Right ventricle myocardium inferior (tissue), 1 donor: ENCODE measurements at regions of chr17 and their contacts with region 1.

Region 1: DNA sequence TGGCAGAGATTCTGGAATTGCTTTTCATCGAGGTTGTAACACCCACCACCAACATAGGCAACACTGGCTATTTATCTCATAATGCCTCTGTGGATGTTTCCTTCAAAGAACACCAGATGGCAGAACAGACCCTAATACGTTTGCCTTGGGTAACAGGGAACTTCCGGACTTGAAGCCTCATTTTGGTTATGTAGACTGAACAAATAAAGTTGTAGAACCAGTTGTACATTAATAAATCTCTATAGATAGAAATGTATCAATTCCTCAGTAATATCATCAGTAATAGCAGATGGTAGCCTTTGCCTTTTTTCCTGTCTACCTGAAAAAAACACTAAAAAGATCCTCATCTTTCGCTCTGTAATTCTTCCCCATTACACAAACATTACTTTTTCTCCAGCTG is 25.9 kb upstream of the APOH start:
- DNase-seq: no peak
- ATAC-seq: peak; percentile 59

Region 2: GRCh38 chr17:66228887-66229782 is 26.0 kb before region 1 on chr17 and contains the start of gene APOH:
- intact Hi-C with region 1: no loop called
- DNase-seq: no peak
- ATAC-seq: no peak
- total RNA-seq, gene APOH: not detected

Region 3: DNA sequence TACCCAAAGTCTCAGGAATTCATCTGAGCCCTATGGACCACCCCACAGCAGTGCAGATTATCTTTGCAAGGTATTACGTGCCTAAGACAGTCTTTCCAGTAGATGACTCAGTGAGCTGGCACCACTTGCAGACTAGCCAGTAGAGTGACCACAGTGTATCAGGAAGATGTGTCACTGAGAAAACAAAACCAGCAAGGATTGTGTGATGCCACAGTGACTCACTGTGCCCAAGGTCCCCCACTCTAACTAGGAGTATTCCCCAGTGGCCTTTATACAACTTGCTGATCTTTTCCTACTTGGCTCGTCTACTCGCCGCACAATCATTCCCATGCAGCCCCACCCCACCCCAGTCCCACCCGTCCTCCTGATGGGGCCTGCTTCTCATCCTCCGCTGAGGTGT is 20.5 kb after region 1 on chr17:
- intact Hi-C with region 1: no loop called
- DNase-seq: no peak
- ATAC-seq: no peak

Region 4: GRCh38 chr17:66304304-66305174 is 49.4 kb after region 1 on chr17:
- intact Hi-C with region 1: no loop called
- DNase-seq: no peak
- ATAC-seq: no peak

Region 5: GRCh38 chr17:66331038-66331816 is 76.1 kb after region 1 on chr17:
- intact Hi-C with region 1: no loop called
- DNase-seq: no peak
- ATAC-seq: peak; percentile 59

Region 6: GRCh38 chr17:66567234-66568170 is 312.4 kb after region 1 on chr17:
- intact Hi-C with region 1: loop called (anchors 2 kb)
- DNase-seq: peak; percentile 84
- ATAC-seq: peak; percentile 71

Region 7: DNA sequence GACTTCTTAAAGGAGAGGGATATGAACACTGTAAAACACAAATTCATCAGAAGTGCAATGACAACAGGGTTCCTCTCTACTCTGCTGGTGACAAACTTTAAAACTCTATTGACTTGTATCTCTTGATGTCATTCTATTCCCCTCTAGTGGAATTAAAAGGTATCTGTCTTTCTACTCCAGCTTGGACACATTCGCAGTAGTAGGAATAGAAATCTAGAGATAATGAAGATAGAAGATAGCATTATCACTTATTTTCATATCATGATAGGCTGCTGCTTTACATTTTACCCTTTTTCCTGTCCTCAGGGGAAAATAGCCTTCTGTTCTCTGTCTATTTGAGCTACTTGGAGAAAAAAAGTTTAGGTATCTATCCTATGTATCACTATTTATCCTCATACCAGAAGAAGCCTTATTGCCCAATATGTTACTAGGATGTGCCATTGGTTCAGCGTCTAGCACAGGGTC is 370.2 kb after region 1 on chr17:
- intact Hi-C with region 1: loop called (anchors 5 kb)
- DNase-seq: no peak
- ATAC-seq: no peak

Region 8: DNA sequence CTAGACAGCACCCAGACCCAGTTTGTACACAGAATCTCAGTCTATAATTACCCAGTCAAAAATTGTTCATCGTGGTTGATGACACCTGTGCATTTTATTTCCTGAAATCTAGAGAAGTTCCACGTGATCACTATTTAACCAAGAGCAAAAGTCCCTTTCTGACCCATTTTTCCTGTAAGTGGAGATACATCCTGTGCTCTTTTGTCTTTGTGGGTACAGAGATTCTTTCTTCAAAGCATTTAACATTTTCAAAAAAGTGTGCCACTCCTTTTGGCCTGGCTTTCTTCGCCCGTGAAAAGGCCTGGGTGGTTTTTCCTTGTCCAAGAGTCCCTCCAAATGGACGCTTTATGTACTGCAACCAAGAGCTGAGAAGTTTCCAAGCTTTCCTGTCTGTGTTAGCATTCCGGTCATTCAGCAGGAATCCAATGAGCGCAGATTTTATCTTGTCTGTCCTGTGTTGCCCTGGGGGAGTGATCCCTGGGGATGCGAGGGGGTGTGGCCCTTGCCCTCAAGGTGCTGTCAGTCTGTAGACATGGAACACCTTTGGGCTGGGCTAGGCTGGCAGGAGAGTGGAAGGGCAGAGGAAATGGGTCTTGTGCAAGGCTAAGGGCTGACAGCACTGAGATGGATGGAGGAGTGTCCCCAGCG is 418.7 kb after region 1 on chr17:
- intact Hi-C with region 1: loop called (anchors 2 kb)
- DNase-seq: no peak
- ATAC-seq: peak; percentile 56